MCF 10A (cell line): ENCODE measurements at regions of chr1 and their contacts with region 1.

Region 1: GRCh38 chr1:23979878-23980724 is at the start of gene SRSF10:
- DNase-seq: peak; percentile 98
- H3K4me3 Mint-ChIP-seq: peak within 1 kb of the TSS; percentile 91
- H3K27ac Mint-ChIP-seq: peak within 1 kb of the TSS; percentile 95
- H3K4me1 Mint-ChIP-seq: peaks cover 38% of the 10 kb centered on the region
- H3K27me3 Mint-ChIP-seq: no peaks in the 10 kb centered on the region
- CTCF ChIP-seq: no peak
- total RNA-seq, gene SRSF10: 121 and 134 TPM in 2 replicates

Region 2: DNA sequence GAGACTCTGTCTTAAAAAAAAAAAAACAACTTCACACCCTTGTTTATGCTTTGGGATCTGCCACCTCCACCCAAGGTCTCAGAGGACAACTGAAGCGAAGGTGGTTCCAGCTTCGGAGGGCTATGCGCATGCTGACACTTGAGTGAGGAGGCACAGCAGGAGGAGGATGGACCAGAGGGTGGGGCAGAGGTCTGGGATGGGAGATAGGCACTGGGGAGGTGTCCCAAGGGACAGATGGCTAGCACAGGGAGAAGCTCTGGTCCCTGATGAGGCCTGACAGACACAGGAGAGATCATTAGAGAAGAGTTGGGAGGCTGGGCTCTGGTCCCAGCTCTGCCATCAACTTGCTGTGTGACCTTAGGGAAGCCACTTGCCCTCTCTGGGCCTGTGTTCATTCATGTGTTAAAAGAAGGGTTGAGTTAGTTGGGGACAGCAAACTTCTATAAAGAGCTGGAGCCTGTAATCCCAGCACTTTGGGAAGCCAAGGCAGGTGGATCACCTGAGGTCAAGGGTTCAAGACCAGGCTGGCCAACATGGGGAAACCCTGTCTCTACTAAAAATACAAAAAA is 465.9 kb before region 1 on chr1:
- CTCF ChIA-PET with region 1: no interaction called
- POLR2A ChIA-PET with region 1: no interaction called
- intact Hi-C with region 1: no loop called
- DNase-seq: no peak
- H3K4me3 Mint-ChIP-seq: no peak overlapping the region
- H3K27ac Mint-ChIP-seq: no peak overlapping the region
- H3K4me1 Mint-ChIP-seq: no peaks in the 10 kb centered on the region
- H3K27me3 Mint-ChIP-seq: no peaks in the 10 kb centered on the region
- CTCF ChIP-seq: no peak

Region 3: GRCh38 chr1:23910553-23911246 is 69.4 kb before region 1 on chr1:
- CTCF ChIA-PET with region 1: no interaction called
- POLR2A ChIA-PET with region 1: no interaction called
- intact Hi-C with region 1: no loop called
- DNase-seq: no peak
- H3K4me3 Mint-ChIP-seq: no peak overlapping the region
- H3K27ac Mint-ChIP-seq: no peak overlapping the region
- H3K4me1 Mint-ChIP-seq: no peaks in the 10 kb centered on the region
- H3K27me3 Mint-ChIP-seq: no peaks in the 10 kb centered on the region
- CTCF ChIP-seq: no peak

Region 4: DNA sequence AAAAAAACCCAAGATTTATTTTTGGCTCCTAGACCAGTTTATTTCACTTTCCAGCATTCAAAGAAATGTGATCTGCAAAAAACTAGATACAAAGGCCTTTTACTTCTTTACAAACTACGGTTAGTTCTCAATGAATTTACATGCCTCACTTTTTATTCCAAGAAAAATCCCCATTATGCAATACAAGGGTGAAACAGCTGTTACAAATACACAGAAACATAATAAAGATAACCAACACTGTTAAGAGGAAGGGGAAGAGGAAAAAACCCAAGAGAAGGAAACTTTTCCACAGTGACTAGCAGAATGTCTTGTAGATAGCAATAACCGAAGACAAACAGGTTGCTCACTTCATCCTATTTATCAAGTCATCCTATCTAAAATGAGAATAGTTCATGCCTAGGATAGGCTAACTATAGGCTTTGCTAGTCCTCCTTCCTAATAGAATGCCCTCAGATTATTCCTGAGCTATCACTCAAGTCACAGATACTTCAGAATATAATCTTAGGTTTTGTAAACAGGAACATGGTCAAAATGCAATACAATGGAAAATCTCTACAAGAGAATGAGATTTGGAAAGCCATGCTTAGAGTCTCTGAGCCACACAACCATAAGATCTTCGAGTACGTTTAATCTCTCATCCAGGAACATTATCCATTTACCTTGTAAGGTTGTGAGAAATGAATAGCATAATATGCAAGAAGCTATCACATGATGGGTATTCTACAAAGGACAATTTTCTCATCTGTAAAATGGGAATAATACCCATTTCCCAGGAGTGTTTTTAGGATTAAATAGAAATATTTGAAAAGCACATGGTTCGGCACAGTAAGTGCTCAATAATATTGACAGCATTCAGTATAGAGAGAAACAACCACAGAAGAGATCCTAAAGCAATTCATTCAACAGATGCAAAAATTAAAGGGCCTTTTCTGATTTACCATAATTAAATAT is 15.0 kb before region 1 on chr1:
- CTCF ChIA-PET with region 1: no interaction called
- POLR2A ChIA-PET with region 1: interaction called, 97 read pairs
- intact Hi-C with region 1: no loop called
- DNase-seq: no peak
- H3K4me3 Mint-ChIP-seq: no peak overlapping the region
- H3K27ac Mint-ChIP-seq: peak overlapping the region; percentile 46
- H3K4me1 Mint-ChIP-seq: peaks cover 10% of the 10 kb centered on the region
- H3K27me3 Mint-ChIP-seq: no peaks in the 10 kb centered on the region
- CTCF ChIP-seq: no peak

Region 5: DNA sequence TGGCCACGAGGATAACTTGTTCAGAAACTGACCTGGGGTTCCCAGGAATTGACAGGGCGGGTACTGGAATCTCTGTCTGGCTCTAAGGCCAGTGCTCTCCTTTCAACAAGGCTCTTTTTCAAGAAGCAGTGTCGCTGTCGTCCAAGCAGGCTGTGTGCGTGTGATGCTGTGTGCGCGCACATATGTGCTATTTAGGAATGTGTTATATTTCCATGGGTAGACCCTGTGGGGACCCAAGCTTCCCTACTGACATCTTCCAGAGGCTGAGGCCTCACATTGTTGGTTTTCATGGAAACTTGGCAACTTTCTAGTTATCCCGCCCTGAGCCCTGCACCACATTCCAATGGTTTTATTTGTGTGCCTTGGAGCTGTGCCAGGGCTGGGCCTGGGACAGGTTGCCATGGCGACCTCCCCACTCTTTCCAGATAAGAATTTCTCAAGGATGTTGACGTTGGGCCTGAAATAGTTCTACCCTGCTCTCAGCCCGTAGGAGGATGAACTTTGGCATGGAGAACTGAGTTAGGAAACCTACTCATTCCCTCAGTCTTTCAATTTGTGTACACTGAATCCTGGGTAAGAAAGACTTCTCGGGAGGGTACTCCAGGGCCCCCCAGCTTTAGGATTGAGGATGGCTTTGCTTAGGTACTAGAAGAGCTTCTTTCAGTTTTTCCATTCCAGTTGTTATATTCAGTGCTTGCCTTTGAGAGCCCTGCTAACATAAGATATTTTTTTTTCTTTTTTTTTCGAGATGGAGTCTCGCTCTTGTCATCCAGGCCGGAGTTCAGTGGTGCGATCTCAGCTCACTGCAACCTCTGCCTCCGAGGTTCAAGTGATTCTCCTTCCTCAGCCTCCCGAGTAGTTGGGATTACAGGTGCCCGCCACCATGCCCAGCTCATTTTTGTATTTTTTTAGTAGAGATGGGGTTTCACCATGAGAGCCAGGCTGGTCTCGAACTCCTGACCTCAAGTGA is 38.8 kb after region 1 on chr1:
- CTCF ChIA-PET with region 1: interaction called, 7 read pairs
- POLR2A ChIA-PET with region 1: interaction called, 79 read pairs
- intact Hi-C with region 1: loop called (anchors 2 kb)
- DNase-seq: peak; percentile 99
- H3K4me3 Mint-ChIP-seq: peak overlapping the region; percentile 58
- H3K27ac Mint-ChIP-seq: peak overlapping the region; percentile 93
- H3K4me1 Mint-ChIP-seq: peaks cover 35% of the 10 kb centered on the region
- H3K27me3 Mint-ChIP-seq: no peaks in the 10 kb centered on the region
- CTCF ChIP-seq: no peak

Region 6: GRCh38 chr1:24047101-24047459 is 67.0 kb after region 1 on chr1:
- CTCF ChIA-PET with region 1: interaction called, 6 read pairs
- POLR2A ChIA-PET with region 1: interaction called, 23 read pairs
- intact Hi-C with region 1: no loop called
- DNase-seq: peak; percentile 94
- H3K4me3 Mint-ChIP-seq: peak overlapping the region; percentile 44
- H3K27ac Mint-ChIP-seq: peak overlapping the region; percentile 68
- H3K4me1 Mint-ChIP-seq: peaks cover 24% of the 10 kb centered on the region
- H3K27me3 Mint-ChIP-seq: no peaks in the 10 kb centered on the region
- CTCF ChIP-seq: no peak